CD4-positive, alpha-beta memory T cell (primary cell): ENCODE measurements at regions of chr9 and their contacts with region 1.

Region 1: GRCh38 chr9:23379842-23380241 is 446.2 kb downstream of the ELAVL2 start:
- DNase-seq: no peak
- H3K4me3 ChIP-seq: no peak overlapping the region
- H3K4me3 Mint-ChIP-seq: no peak overlapping the region
- H3K27ac ChIP-seq: no peak overlapping the region
- H3K27ac Mint-ChIP-seq: no peak overlapping the region
- H3K4me1 ChIP-seq: no peaks in the 10 kb centered on the region
- H3K4me1 Mint-ChIP-seq: no peaks in the 10 kb centered on the region
- H3K27me3 ChIP-seq: no peaks in the 10 kb centered on the region
- H3K27me3 Mint-ChIP-seq: no peaks in the 10 kb centered on the region

Region 2: DNA sequence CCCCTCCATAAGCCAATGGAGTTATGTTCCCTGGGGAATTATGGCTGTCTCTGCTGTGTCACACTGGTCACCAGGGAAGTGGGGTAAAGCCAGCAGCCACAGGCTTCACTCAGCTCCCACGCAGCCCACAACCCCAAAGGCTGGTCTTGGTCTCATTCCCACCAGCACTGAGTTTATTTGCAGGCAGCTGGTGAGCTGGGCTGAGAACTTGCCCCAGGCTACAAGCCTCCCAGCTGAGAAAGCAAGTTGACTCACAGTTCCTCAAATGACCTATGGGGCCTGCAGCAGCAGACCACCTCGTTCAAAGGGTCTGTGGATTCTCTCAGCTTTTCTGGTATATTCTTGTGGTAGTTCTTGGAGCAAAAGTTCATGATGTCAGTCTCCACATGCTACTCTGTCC is 22.2 kb before region 1 on chr9:
- CTCF ChIA-PET with region 1: no interaction called
- POLR2A ChIA-PET with region 1: no interaction called
- intact Hi-C with region 1: loop called (anchors 1 kb)
- DNase-seq: no peak
- H3K4me3 ChIP-seq: no peak overlapping the region
- H3K4me3 Mint-ChIP-seq: no peak overlapping the region
- H3K27ac ChIP-seq: no peak overlapping the region
- H3K27ac Mint-ChIP-seq: no peak overlapping the region
- H3K4me1 ChIP-seq: no peaks in the 10 kb centered on the region
- H3K4me1 Mint-ChIP-seq: no peaks in the 10 kb centered on the region
- H3K27me3 ChIP-seq: no peaks in the 10 kb centered on the region
- H3K27me3 Mint-ChIP-seq: no peaks in the 10 kb centered on the region